ENCODE measurements at regions of chr18 and their contacts with region 1.

Region 1: GRCh38 chr18:77000527-77000926 is 132.1 kb downstream of the MBP start:
- DNase-seq: no peak
- ATAC-seq: peak; percentile 61
- H3K4me3 Mint-ChIP-seq: no peak overlapping the region
- H3K27ac Mint-ChIP-seq: no peak overlapping the region
- H3K4me1 Mint-ChIP-seq: peaks cover 18% of the 10 kb centered on the region
- H3K27me3 Mint-ChIP-seq: no peaks in the 10 kb centered on the region
- CTCF ChIP-seq: peak; percentile 82

Region 2: GRCh38 chr18:76922107-76922506 is 78.4 kb before region 1 on chr18:
- CTCF ChIA-PET with region 1: interaction called, 10 read pairs
- POLR2A ChIA-PET with region 1: interaction called, 4 read pairs
- intact Hi-C with region 1: no loop called
- DNase-seq: peak; percentile 39
- ATAC-seq: peak; percentile 100
- H3K4me3 Mint-ChIP-seq: peak overlapping the region; percentile 13
- H3K27ac Mint-ChIP-seq: peak overlapping the region; percentile 57
- H3K4me1 Mint-ChIP-seq: peaks cover 8% of the 10 kb centered on the region
- H3K27me3 Mint-ChIP-seq: no peaks in the 10 kb centered on the region
- CTCF ChIP-seq: no peak

Region 3: GRCh38 chr18:77061946-77062517 is 61.5 kb after region 1 on chr18:
- CTCF ChIA-PET with region 1: interaction called, 29 read pairs
- POLR2A ChIA-PET with region 1: no interaction called
- intact Hi-C with region 1: loop called (anchors 1 kb)
- DNase-seq: no peak
- ATAC-seq: peak; percentile 30
- H3K4me3 Mint-ChIP-seq: peak overlapping the region; percentile 55
- H3K27ac Mint-ChIP-seq: peak overlapping the region; percentile 94
- H3K4me1 Mint-ChIP-seq: peaks cover 83% of the 10 kb centered on the region
- H3K27me3 Mint-ChIP-seq: no peaks in the 10 kb centered on the region
- CTCF ChIP-seq: no peak

Region 4: DNA sequence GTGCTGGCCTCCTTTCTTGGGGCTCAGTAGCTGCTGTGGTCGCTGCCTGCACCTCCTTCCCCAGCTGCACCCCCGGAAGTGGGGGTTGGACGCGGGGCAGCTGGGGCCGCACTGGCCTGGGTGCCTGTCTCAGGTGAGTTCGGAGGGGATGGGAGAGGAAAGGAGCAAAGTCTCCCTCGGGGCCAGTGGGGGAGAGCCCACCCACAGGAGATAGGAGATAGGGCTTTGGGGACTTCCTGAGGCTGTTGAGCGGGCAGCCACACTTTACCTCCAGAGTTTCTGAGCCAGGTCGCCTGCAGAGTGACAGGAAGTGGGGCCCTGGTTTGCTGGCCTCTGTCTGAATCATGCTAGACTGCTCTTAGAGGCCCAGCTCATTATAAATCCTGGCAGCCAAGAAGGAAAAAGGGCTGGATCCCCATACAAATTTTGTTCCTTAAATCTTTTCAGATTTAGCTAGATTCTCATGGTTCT is 124.0 kb after region 1 on chr18:
- CTCF ChIA-PET with region 1: interaction called, 4 read pairs
- POLR2A ChIA-PET with region 1: interaction called, 4 read pairs
- intact Hi-C with region 1: loop called (anchors 2 kb)
- DNase-seq: no peak
- ATAC-seq: peak; percentile 43
- H3K4me3 Mint-ChIP-seq: peak overlapping the region; percentile 38
- H3K27ac Mint-ChIP-seq: peak overlapping the region; percentile 77
- H3K4me1 Mint-ChIP-seq: peaks cover 94% of the 10 kb centered on the region
- H3K27me3 Mint-ChIP-seq: no peaks in the 10 kb centered on the region
- CTCF ChIP-seq: no peak

Region 5: DNA sequence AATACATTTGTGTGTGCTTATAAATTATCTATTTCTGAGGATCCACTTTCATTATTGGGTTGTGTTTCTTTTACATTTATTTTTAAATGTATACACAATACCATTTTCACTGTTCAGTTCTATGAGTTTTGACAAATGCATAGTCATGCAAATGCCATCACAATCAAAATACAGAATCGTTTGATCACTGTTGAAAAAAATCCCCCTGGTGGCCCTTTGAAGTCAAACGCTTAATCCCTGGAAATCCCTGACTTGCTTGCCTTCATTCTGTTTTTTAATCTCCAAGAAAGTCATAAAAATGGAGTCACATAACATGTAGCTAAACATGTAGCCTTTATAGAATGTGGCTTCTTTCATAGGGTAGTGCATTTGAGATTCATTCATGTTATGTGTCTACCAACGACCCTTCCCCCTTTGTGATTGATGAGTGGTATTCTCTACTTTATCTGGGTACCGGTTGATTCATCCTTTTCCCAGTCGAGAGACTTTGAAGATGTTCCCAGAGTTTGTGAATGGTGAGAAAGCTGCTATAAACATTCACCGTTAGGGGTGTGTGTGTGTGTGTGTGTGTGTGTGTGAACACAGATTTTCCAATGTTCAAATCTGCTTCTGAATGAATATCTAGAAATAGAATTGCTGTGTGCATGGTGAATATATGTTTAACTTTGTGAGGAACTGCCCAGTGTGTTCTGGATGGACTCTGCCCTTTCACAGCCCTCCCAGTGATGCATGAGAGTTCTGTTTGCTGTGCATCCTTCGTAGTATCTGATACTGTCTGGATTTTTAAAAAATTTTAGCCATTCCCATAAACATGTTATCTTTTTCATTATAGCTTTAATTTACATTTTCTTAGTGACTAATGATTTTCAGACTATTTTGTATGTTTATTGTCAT is 422.7 kb after region 1 on chr18:
- CTCF ChIA-PET with region 1: no interaction called
- POLR2A ChIA-PET with region 1: no interaction called
- intact Hi-C with region 1: loop called (anchors 10 kb)
- DNase-seq: no peak
- ATAC-seq: no peak
- H3K4me3 Mint-ChIP-seq: no peak overlapping the region
- H3K27ac Mint-ChIP-seq: no peak overlapping the region
- H3K4me1 Mint-ChIP-seq: no peaks in the 10 kb centered on the region
- H3K27me3 Mint-ChIP-seq: peaks cover 2% of the 10 kb centered on the region
- CTCF ChIP-seq: no peak

Region 6: GRCh38 chr18:77702686-77703085 is 702.2 kb after region 1 on chr18:
- CTCF ChIA-PET with region 1: no interaction called
- POLR2A ChIA-PET with region 1: no interaction called
- intact Hi-C with region 1: loop called (anchors 1 kb)
- DNase-seq: no peak
- ATAC-seq: no peak
- H3K4me3 Mint-ChIP-seq: no peak overlapping the region
- H3K27ac Mint-ChIP-seq: no peak overlapping the region
- H3K4me1 Mint-ChIP-seq: no peaks in the 10 kb centered on the region
- H3K27me3 Mint-ChIP-seq: peaks cover 10% of the 10 kb centered on the region
- CTCF ChIP-seq: no peak